AG04450 (cell line): ENCODE measurements at regions of chr6 and their contacts with region 1.

Region 1: DNA sequence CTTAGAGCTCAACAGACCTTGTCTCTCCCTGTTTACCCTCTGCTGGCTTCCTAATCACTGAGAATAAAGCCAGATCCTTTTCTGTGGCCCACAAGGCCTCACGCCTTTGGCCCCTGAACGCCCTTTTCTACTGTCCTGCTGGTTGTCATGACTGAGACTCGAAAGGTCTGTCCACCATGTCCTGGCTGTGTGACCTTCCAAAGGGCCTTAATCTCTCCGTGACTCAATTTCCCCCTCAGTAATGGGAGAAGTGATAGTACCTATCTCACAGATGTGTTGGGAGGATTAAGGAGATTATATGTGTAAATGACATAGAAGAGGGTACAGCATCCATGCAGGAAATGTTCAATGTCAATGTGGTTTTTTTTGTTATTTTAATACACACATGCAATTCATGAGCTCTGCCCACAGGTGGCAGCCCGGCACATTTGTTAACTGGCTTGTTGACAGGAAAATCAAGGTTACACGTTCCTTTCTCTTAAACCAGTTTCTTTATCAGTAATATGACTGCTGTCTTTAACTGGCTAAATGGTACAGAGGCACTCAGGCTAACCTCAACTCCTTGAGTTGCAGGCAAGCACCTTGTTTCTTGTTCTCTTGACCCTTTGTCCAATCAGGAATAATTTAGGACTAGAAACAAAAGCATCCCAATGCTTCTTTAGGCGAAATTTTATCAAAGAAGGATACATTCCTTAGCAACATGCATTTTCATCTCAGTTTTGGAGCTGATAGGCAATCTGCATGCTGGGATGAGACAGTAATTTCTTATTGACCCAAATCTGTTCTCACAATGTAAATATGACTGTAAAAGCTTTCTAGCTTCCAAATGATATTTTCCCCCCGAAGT is 16.6 kb downstream of the SLC22A1 start:
- DNase-seq: peak; percentile 27
- H3K4me3 ChIP-seq: no peak overlapping the region
- H3K27ac ChIP-seq: no peak overlapping the region
- H3K27me3 ChIP-seq: no peaks in the 10 kb centered on the region
- CTCF ChIP-seq: peak; percentile 76

Region 2: DNA sequence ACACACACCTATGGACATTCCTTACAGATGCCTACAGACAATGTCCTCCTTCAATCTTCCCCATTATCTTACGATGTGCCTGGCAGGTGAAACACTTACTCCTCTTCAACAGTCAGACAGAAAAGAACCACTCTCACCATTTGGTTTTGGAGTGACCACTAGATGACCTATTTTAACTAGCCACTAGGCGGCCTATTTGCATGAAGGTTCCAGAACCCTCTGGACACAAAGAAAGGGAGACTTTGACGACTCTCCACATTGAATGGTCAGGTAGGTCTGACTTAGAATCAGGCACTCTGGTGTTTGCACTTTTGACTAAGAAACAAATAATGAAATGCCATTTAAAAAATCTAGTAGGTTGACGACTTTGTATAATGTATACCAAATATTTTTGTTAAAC is 296.2 kb before region 1 on chr6:
- CTCF ChIA-PET with region 1: no interaction called
- POLR2A ChIA-PET with region 1: no interaction called
- DNase-seq: no peak
- H3K4me3 ChIP-seq: no peak overlapping the region
- H3K27ac ChIP-seq: no peak overlapping the region
- H3K27me3 ChIP-seq: no peaks in the 10 kb centered on the region
- CTCF ChIP-seq: peak; percentile 43

Region 3: GRCh38 chr6:160120087-160120486 is 18.1 kb before region 1 on chr6:
- CTCF ChIA-PET with region 1: interaction called, 16 read pairs
- POLR2A ChIA-PET with region 1: no interaction called
- DNase-seq: no peak
- H3K4me3 ChIP-seq: no peak overlapping the region
- H3K27ac ChIP-seq: no peak overlapping the region
- H3K27me3 ChIP-seq: no peaks in the 10 kb centered on the region
- CTCF ChIP-seq: no peak